HepG2 (cell line): ENCODE measurements at regions of chr10 and their contacts with region 1.

Region 1: DNA sequence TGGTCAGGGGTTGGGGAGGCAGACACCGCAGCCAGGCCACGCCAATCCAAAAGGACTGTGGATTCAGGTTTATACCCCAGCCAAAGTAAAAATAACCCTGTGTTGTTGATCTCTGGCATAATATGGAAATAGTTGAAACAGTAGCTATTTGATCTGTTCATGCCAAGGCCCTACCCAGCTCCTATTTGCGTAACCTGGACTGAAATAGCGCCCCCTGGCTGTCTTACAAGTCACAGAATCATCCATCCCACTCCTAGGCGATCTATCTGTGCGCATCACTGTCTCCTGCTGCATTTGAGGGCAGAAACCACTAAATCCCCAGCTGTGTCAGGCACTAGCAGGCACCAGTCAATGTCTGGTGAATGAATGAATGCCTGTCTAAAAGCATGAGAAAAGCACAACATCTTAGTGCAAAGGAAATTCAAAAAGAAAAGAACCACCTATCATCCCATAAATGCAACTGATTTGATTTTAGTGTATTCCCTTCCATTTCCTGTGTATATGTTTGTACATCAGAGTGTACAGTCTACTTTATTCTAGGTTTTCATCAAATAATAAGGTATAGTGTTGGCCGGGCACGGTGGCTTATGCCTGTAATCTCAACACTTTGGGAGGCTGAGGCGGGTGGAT is 160.0 kb downstream of the SLIT1 start:
- DNase-seq: peak; percentile 50
- ATAC-seq: peak; percentile 75
- H3K4me3 ChIP-seq: no peak overlapping the region
- H3K27ac ChIP-seq: no peak overlapping the region
- H3K4me1 ChIP-seq: peaks cover 53% of the 10 kb centered on the region
- H3K27me3 ChIP-seq: peaks cover 2 to 10% of the 10 kb centered on the region in 2 experiments; a peak in 3 of 5 replicates
- CTCF ChIP-seq: peak; percentile 77
- EP300 ChIP-seq: no peak
- POLR2A ChIP-seq: no peak
- RAD21 ChIP-seq: 0 out of 2 replicates have a peak, but pooled peaks have one; percentile 8

Region 2: DNA sequence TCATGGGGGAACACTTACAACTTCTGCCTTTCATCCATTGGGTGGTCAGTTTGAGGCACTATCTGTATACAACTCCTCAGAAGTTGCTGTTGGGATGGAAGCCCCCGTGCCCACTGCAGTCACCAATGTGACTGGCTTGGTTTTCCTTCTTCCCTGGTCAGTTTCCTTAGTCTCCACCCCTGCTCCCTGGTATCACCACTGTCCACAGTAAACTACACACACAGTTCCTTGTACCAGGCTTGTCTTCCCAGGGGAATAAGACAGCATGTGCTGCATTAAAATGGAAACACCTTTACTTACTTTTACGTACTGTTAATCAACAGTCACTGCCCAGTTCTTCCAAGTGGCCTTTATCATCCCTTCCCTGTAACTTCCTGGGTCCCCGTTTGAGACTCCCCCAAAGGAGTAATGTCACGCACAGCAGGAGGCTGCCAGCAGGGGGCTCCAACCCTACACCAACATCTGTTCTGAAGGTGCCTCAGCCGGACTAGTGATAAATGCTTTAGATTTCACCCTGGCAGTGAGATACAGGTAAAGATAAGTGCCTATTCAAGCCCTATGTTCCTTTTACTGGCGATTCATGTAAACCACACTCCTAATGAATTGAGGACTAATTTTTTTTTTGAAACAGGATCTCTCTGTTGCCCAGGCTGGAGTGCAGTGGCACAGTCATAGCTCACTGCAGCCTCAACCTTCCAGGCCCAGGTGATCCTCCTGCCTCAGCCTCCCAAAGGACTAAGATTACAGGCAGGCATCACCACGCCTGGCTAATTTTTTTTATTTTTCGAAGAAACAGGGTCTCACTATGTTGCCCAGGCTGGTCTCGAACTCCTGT is 260.1 kb before region 1 on chr10:
- CTCF ChIA-PET with region 1: no interaction called
- POLR2A ChIA-PET with region 1: no interaction called
- in situ Hi-C with region 1: no loop called
- intact Hi-C with region 1: loop called (anchors 2 kb)
- DNase-seq: peak; percentile 62
- ATAC-seq: peak; percentile 97
- H3K4me3 ChIP-seq: no peak overlapping the region
- H3K27ac ChIP-seq: no peak overlapping the region
- H3K4me1 ChIP-seq: no peaks in the 10 kb centered on the region
- H3K27me3 ChIP-seq: no peaks in the 10 kb centered on the region
- CTCF ChIP-seq: peak; percentile 92
- EP300 ChIP-seq: no peak
- POLR2A ChIP-seq: no peak
- RAD21 ChIP-seq: peak; percentile 86

Region 3: DNA sequence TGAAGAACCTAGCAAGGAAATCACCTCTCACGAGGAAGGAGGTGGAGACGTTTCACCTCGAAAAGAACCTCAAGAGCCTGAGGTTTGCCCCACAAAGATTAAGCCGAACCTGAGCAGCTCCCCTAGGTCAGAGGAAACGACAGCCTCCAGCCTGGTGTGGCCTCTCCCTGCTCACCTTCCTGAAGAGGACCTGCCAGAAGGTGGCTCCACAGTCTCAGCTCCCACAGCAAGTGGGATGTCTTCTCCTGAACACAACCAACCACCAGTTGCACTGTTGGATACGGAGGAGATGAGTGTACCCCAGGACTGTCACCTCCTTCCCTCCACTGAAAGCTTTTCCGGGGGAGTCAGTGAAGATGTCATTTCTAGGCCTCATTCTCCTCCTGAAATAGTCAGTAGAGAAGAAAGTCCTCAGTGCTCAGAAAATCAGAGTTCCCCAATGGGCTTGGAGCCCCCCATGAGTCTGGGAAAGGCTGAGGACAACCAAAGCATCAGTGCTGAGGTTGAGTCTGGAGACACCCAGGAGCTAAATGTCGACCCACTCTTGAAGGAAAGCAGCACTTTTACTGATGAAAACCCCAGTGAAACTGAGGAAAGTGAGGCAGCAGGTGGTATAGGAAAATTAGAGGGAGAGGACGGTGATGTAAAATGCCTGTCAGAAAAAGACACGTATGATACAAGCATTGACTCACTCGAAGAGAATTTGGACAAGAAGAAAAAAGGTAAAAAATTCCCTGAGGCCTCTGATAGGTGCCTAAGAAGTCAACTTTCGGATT is 43.4 kb before region 1 on chr10:
- CTCF ChIA-PET with region 1: no interaction called
- POLR2A ChIA-PET with region 1: no interaction called
- in situ Hi-C with region 1: no loop called
- intact Hi-C with region 1: loop called (anchors 1 kb)
- DNase-seq: no peak
- ATAC-seq: peak; percentile 61
- H3K4me3 ChIP-seq: no peak overlapping the region
- H3K27ac ChIP-seq: no peak overlapping the region
- H3K4me1 ChIP-seq: no peaks in the 10 kb centered on the region
- H3K27me3 ChIP-seq: no peaks in the 10 kb centered on the region
- CTCF ChIP-seq: peak; percentile 41
- EP300 ChIP-seq: no peak
- POLR2A ChIP-seq: no peak
- RAD21 ChIP-seq: no peak

Region 4: DNA sequence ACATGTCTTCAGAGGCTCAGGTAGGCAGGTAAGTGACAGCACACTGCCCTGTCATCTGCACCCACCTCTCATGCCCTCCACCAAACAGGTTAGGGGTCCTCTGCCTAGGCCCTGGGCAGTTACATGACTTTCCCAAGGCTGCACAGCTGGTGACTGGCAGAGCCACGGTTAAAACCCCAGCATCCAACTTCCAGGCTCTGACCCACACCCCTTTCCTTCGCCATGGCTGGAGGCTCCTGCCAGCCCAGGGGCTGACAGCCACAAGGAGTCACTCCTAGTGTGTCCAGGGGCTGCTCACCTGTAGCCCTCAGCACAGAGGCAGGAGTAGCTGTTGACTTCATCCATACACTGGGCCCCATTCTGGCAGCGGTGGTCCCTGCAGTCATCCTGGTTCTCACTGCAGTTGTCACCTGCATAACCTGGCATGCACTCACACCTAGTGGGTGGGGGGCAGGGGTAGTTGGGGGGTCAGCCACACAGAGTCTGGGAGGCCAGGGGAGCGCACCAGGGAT is 15.0 kb before region 1 on chr10:
- CTCF ChIA-PET with region 1: no interaction called
- POLR2A ChIA-PET with region 1: no interaction called
- in situ Hi-C with region 1: no loop called
- intact Hi-C with region 1: no loop called
- DNase-seq: no peak
- ATAC-seq: peak; percentile 55
- H3K4me3 ChIP-seq: no peak overlapping the region
- H3K27ac ChIP-seq: no peak overlapping the region
- H3K4me1 ChIP-seq: no peaks in the 10 kb centered on the region
- H3K27me3 ChIP-seq: peaks cover 2 to 18% of the 10 kb centered on the region in 2 experiments; a peak in 4 of 5 replicates
- CTCF ChIP-seq: no peak
- EP300 ChIP-seq: no peak
- POLR2A ChIP-seq: no peak
- RAD21 ChIP-seq: no peak